Mammary epithelial cell (primary cell): ENCODE measurements at regions of chr3 and their contacts with region 1.

Region 1: DNA sequence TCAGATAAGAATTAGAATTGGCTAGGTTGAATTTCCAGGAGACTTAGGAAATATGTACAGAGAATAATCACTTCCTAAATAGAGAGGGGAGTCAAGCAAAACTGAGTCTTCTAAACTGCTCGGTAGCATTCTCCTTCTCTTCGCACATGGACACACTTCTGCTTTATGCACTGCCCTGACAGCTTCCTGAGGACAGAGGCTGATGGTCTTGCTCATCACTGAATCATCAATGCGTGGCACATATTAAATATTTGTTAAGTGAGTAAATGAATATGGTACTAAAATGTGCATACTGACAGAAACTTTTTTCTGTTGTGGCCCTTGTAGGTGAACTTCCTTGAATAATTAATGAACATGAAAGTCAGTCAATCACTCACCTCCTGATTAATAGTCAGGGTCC is 315.5 kb downstream of the FHIT start:
- DNase-seq: peak; percentile 82
- H3K4me3 ChIP-seq: no peak overlapping the region
- H3K27ac ChIP-seq: peak overlapping the region; percentile 41
- H3K4me1 ChIP-seq: peaks cover 19% of the 10 kb centered on the region
- H3K27me3 ChIP-seq: no peaks in the 10 kb centered on the region
- CTCF ChIP-seq: no peak

Region 2: DNA sequence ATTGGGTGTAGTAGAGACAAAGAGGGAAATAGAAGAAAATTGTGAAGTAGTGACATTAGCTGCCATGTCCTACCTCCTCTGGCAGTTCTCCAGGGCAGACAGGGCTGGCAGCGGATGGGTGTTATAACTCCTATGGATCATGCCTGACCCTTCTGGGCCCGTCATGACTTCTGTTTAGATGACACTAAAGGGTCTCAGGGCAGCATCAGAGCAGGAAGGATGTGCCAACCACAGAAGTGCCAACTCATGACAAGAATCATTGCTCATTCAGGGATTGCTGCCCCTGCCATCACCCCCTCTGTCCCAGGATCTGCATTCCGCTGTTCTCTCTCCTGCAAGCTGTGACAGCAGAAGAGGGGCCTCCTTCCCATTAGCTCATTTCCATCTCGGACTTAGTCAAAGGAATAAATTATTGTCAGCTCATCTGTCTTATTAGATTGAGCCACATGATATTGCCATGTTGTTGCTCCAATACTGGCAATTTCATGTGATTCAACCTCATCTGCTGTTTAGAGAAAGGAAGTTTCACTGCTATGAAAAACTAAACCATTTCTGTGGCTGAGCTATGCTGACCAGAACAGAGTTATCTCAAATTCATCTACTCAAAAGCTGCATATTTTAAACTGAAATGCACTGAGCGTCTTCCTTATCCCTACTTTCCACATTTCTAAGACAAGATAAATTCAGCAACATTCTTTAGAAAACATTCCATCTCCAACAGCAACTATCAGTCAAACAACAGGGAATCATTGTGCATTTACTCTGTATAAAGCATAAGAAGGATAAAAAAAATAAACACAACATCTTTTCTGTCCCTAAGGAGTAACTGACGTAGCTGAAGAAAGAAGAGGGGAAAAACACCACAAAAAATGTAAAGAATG is 44.0 kb after region 1 on chr3:
- CTCF ChIA-PET with region 1: interaction called, 37 read pairs
- dilution Hi-C with region 1: no loop called
- in situ Hi-C with region 1: no loop called
- intact Hi-C with region 1: no loop called
- DNase-seq: no peak
- H3K4me3 ChIP-seq: no peak overlapping the region
- H3K27ac ChIP-seq: no peak overlapping the region
- H3K4me1 ChIP-seq: no peaks in the 10 kb centered on the region
- H3K27me3 ChIP-seq: no peaks in the 10 kb centered on the region
- CTCF ChIP-seq: no peak

Region 3: DNA sequence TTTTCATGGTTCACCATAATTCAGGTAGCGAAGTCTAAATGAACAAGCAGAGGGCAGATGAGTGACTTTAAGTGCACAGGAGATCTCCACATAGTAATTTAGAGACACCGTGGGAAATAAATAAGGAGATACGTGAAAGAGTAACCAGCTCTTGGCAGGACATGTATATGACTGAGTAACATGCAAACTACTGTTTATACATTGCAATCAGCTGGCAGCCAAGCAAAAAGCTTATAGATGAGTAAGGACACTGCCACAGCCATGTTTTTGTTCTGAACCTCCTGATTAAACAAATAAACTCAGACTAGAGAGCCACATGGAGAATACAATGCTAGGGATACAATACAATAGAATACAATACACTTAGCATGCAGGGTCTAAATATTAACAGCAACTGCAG is 63.1 kb after region 1 on chr3:
- CTCF ChIA-PET with region 1: no interaction called
- dilution Hi-C with region 1: no loop called
- in situ Hi-C with region 1: no loop called
- intact Hi-C with region 1: no loop called
- DNase-seq: no peak
- H3K4me3 ChIP-seq: no peak overlapping the region
- H3K27ac ChIP-seq: no peak overlapping the region
- H3K4me1 ChIP-seq: no peaks in the 10 kb centered on the region
- H3K27me3 ChIP-seq: no peaks in the 10 kb centered on the region
- CTCF ChIP-seq: no peak